SK-N-SH (cell line): ENCODE measurements at regions of chr2 and their contacts with region 1.

Region 1: GRCh38 chr2:74833418-74834233 is at the start of gene HK2:
- DNase-seq: peak; percentile 99
- H3K4me3 ChIP-seq: peak within 1 kb of the TSS; percentile 83 to 85
- H3K27ac ChIP-seq: peak within 1 kb of the TSS; percentile 11 to 77; a peak in 3 of 4 replicates
- H3K4me1 ChIP-seq: peaks cover 0 to 25% of the 10 kb centered on the region in 2 experiments; a peak in 1 of 4 replicates
- H3K27me3 ChIP-seq: no peaks in the 10 kb centered on the region
- CTCF ChIP-seq: no peak
- EP300 ChIP-seq: no peak
- RAD21 ChIP-seq: 0 out of 2 replicates have a peak, but pooled peaks have one; percentile 6
- polyA plus RNA-seq, gene HK2: 13.5 and 15.1 TPM in 2 replicates

Region 2: GRCh38 chr2:74715078-74715791 is 118.4 kb before region 1 on chr2:
- CTCF ChIA-PET with region 1: interaction called, 63 read pairs
- POLR2A ChIA-PET with region 1: interaction called, 3 read pairs
- DNase-seq: peak; percentile 89
- H3K4me3 ChIP-seq: peak overlapping the region; percentile 63 to 64
- H3K27ac ChIP-seq: peak overlapping the region in 1 of 2 experiments; percentile 53; a peak in 1 of 4 replicates
- H3K4me1 ChIP-seq: peaks cover 0 to 4% of the 10 kb centered on the region in 2 experiments; a peak in 2 of 4 replicates
- H3K27me3 ChIP-seq: no peaks in the 10 kb centered on the region
- CTCF ChIP-seq: peak; percentile 93
- EP300 ChIP-seq: no peak
- RAD21 ChIP-seq: peak; percentile 81

Region 3: DNA sequence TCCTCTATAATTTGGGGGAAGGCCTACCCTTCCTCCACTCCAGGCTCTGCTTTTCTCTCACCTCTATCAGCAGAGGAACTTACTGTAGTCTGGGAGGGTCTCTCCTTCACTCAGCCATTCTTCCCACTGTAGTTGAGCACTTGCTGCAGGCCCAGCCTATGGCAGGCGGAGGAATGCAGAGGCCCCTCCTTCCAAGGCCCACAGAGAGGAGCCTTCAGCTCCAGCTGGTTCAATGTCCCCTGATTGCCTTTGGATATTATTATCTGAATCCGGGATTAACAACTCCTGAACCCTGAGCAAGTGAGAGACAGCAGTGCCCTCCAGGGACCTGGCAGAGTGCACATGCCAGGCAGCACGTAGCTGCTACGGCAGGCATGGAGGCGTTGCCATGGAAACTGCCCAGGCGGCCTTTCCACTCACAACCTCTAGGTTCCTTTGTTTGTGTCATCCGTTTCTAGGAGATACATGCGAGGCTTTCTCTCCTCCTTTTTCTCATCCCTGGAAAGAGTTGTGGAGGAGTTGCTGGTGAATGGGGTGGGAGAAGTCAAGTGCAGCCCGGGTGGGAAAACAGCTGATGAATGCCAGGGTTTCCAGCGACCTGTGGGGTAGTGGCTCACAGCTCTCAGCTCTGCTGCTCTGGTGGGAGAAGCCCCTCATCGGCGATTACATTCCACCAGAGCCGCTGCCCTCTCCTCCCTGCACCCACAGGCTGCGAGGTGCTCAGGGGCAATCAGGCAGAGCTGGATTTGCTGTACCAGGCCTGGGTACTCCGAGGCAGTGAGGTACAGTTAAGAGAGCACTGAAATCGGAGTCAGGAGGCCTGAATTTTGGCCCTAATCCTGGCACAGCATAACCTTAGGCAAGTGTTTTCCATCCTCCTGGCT is 55.0 kb before region 1 on chr2:
- CTCF ChIA-PET with region 1: interaction called, 11 read pairs
- POLR2A ChIA-PET with region 1: interaction called, 15 read pairs
- DNase-seq: peak; percentile 84
- H3K4me3 ChIP-seq: no peak overlapping the region
- H3K27ac ChIP-seq: peak overlapping the region in 1 of 2 experiments; percentile 73; a peak in 2 of 4 replicates
- H3K4me1 ChIP-seq: peaks cover 0 to 22% of the 10 kb centered on the region in 2 experiments; a peak in 2 of 4 replicates
- H3K27me3 ChIP-seq: no peaks in the 10 kb centered on the region
- CTCF ChIP-seq: no peak
- EP300 ChIP-seq: no peak
- RAD21 ChIP-seq: peak; percentile 50

Region 4: DNA sequence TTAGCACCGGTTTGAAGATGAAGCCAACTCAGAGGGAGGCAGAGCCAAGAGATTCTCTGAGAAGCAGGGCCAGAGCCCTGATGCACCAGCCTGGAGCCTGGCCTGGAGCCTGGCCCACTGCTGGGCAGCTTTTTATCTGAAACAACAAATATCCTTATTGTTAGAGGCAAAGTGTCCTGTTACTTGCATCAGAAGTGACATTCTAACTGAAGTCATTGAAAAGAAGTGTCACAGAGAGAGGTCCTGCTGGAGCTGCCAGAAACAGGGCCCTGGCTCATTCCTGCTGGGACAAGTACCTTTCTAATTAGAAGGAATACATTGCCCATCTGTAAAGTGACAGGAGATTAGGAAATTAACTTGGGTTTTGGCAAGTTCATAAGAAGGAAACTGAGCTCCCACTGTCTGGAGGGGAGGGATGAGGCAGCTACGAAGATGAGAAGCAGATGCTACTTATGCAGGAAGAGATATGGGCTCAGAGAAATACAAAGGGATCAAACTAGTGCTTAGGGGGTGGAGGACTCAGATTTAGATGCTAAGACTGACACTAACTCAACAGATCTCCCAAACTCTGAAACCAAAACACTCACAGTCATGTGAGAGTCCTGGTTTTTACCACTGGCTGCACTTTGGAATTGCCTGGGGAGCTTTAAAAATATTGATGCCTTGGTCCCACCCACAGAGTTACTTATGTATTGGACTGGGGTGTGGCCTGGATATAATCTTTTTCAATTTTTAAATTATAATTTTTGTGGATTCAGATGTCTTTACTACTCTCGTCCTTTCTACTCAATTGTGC is 10.7 kb before region 1 on chr2:
- CTCF ChIA-PET with region 1: interaction called, 26 read pairs
- POLR2A ChIA-PET with region 1: no interaction called
- DNase-seq: no peak
- H3K4me3 ChIP-seq: no peak overlapping the region
- H3K27ac ChIP-seq: peak overlapping the region in 1 of 2 experiments; percentile 62; a peak in 2 of 4 replicates
- H3K4me1 ChIP-seq: peaks cover 4 to 8% of the 10 kb centered on the region in 2 experiments; a peak in 3 of 4 replicates
- H3K27me3 ChIP-seq: no peaks in the 10 kb centered on the region
- CTCF ChIP-seq: no peak
- EP300 ChIP-seq: no peak
- RAD21 ChIP-seq: no peak

Region 5: GRCh38 chr2:74864846-74865722 is 31.5 kb after region 1 on chr2:
- CTCF ChIA-PET with region 1: interaction called, 50 read pairs
- POLR2A ChIA-PET with region 1: interaction called, 8 read pairs
- DNase-seq: peak; percentile 46
- H3K4me3 ChIP-seq: no peak overlapping the region
- H3K27ac ChIP-seq: no peak overlapping the region; a peak in 1 of 4 replicates
- H3K4me1 ChIP-seq: peaks cover 4 to 49% of the 10 kb centered on the region in 2 experiments; a peak in 3 of 4 replicates
- H3K27me3 ChIP-seq: no peaks in the 10 kb centered on the region
- CTCF ChIP-seq: no peak
- EP300 ChIP-seq: no peak
- RAD21 ChIP-seq: no peak